ENCODE measurements at regions of chr2 and their contacts with region 1.

Region 1: DNA sequence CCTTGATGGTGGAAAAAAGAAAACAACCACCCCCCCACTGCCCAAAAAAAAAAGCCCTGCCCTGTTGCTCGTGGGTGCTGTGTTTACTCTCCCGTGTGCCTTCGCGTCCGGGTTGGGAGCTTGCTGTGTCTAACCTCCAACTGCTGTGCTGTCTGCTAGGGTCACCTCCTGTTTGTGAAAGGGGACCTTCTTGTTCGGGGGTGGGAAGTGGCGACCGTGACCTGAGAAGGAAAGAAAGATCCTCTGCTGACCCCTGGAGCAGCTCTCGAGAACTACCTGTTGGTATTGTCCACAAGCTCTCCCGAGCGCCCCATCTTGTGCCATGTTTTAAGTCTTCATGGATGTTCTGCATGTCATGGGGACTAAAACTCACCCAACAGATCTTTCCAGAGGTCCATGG is 28.0 kb downstream of the MAL start:
- DNase-seq: peak; percentile 59
- ATAC-seq: no peak
- H3K4me3 Mint-ChIP-seq: no peak overlapping the region
- H3K27ac Mint-ChIP-seq: peak overlapping the region; percentile 85
- H3K4me1 Mint-ChIP-seq: peaks cover 70% of the 10 kb centered on the region
- H3K27me3 Mint-ChIP-seq: no peaks in the 10 kb centered on the region
- CTCF ChIP-seq: peak; percentile 11

Region 2: DNA sequence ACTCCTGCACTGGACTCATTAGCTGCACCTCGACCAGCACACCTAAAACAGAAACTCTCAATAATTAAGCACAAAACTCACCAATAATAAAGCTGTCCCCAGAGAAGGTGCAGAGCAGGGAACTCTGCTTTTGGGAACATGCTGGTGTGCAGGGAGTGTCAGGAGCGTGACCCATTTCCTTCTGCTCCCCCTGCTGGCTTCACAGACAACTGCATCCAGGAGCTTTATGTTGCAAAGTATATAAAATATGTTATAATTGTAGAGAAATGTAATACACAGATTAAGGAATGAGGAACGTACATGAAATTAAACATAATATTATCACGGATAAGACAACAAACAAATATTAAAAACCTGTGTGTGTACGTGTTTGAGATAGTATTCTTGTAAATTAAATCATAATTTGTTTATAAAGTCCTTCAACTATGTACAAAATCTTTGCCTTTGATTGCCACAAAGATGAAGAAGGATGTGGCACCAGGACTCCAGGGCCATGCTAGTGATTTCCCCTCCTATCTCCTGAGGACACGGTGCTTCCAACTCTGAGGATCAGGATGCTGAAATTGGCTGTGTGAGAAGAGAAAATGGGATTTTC is 96.6 kb before region 1 on chr2:
- CTCF ChIA-PET with region 1: no interaction called
- POLR2A ChIA-PET with region 1: no interaction called
- intact Hi-C with region 1: no loop called
- DNase-seq: peak; percentile 59
- ATAC-seq: peak; percentile 64
- H3K4me3 Mint-ChIP-seq: no peak overlapping the region
- H3K27ac Mint-ChIP-seq: no peak overlapping the region
- H3K4me1 Mint-ChIP-seq: no peaks in the 10 kb centered on the region
- H3K27me3 Mint-ChIP-seq: peaks cover 34% of the 10 kb centered on the region
- CTCF ChIP-seq: peak; percentile 95

Region 3: DNA sequence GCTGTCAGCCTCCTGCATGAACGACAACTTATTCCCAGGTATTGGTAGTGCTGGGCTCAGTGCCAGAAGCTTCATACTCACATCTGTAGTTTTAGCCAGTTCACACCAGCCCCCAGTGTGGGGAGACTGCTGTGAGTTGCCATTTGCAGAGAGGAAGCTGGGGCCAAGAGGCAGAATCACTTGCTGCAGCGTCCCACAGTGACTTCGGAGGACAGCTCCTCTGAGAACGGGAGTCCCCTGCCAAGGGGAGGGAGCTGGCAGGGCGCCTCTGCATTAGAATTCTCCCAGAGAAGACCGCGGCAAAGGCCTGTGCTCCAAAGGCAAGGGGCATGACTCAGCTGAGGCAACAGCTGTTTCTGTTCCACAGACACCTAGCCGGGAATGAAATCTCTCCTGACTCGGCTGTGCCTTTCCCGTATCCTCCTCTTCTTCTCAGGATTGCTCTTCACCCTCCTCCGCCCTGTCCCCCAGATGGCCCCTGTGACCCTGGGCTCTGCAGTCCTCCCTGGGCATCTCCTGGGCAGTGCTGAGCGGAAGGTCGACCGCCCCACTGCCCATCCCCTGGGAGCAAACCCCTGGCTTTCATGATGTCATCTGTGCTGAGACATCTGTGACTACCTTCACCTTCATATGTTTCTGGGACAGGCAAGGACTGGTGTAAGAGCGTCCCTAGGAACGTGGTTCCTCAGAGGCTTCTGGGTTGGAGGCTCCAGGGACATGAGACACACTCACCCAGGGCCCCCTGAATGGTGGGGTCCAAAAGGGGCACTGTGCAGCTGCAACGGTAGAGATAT is 10.0 kb before region 1 on chr2:
- CTCF ChIA-PET with region 1: interaction called, 16 read pairs
- POLR2A ChIA-PET with region 1: interaction called, 10 read pairs
- intact Hi-C with region 1: no loop called
- DNase-seq: peak; percentile 83
- ATAC-seq: peak; percentile 74
- H3K4me3 Mint-ChIP-seq: no peak overlapping the region
- H3K27ac Mint-ChIP-seq: peak overlapping the region; percentile 23
- H3K4me1 Mint-ChIP-seq: peaks cover 76% of the 10 kb centered on the region
- H3K27me3 Mint-ChIP-seq: no peaks in the 10 kb centered on the region
- CTCF ChIP-seq: no peak

Measured in activated CD8-positive, alpha-beta T cell treated with anti-CD3 and anti-CD28 coated beads for 36 hours (primary cell).